IMR-90 (cell line): ENCODE measurements at regions of chr1 and their contacts with region 1.

Region 1: DNA sequence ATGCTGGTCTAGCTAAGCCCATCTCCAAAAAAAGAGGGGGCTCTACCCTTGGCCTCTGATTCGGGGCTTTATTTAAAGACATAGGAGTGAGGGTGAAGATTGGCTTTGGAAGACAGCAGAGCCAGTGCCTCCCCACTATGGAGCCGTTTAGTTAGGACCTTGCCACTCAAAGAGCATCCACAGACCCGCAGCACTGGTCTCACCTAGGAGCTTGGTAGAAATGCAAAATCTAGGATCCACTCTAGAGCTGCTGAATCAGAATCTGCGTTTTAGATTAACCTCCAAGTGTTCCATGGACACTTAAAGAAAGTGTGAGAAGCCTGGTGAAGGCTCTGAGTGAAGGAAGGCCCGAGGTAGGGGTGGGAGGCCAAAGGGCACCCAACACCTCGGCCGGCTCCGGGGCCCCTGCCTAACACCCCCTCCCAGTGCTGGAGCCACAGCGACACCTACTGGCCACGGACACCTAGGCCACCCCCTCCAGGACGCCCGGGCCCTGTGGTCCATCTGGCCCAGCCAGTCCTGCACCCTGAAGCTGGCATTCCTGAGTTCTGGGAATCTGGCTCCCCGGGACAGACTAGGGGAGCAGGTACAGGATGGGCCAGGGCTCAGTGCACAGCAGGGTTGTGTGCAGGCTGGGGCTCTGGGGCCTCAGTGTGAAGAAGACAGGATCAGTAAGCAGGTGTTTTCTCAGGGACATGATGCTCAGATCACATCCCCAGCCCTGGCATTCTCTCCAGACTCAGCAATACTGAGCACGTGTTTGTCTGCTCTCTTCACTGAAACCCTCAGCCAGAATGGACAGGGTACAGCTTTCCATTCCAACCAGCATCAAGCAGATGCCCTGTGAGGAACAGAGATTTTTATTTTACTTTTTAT is 79.2 kb downstream of the TMEM53 start:
- DNase-seq: peak; percentile 31
- ATAC-seq: peak; percentile 98
- H3K4me3 ChIP-seq: no peak overlapping the region
- H3K27ac ChIP-seq: no peak overlapping the region
- H3K4me1 ChIP-seq: no peaks in the 10 kb centered on the region
- H3K27me3 ChIP-seq: peaks cover 44% of the 10 kb centered on the region
- CTCF ChIP-seq: peak; percentile 90
- POLR2A ChIP-seq: no peak
- RAD21 ChIP-seq: peak; percentile 94

Region 2: GRCh38 chr1:44012941-44013609 is 582.0 kb before region 1 on chr1:
- CTCF ChIA-PET with region 1: no interaction called
- POLR2A ChIA-PET with region 1: no interaction called
- dilution Hi-C with region 1: no loop called
- in situ Hi-C with region 1: no loop called
- intact Hi-C with region 1: loop called (anchors 5 kb)
- DNase-seq: no peak
- ATAC-seq: no peak
- H3K4me3 ChIP-seq: no peak overlapping the region
- H3K27ac ChIP-seq: no peak overlapping the region
- H3K4me1 ChIP-seq: no peaks in the 10 kb centered on the region
- H3K27me3 ChIP-seq: no peaks in the 10 kb centered on the region
- CTCF ChIP-seq: no peak
- POLR2A ChIP-seq: no peak
- RAD21 ChIP-seq: no peak

Region 3: DNA sequence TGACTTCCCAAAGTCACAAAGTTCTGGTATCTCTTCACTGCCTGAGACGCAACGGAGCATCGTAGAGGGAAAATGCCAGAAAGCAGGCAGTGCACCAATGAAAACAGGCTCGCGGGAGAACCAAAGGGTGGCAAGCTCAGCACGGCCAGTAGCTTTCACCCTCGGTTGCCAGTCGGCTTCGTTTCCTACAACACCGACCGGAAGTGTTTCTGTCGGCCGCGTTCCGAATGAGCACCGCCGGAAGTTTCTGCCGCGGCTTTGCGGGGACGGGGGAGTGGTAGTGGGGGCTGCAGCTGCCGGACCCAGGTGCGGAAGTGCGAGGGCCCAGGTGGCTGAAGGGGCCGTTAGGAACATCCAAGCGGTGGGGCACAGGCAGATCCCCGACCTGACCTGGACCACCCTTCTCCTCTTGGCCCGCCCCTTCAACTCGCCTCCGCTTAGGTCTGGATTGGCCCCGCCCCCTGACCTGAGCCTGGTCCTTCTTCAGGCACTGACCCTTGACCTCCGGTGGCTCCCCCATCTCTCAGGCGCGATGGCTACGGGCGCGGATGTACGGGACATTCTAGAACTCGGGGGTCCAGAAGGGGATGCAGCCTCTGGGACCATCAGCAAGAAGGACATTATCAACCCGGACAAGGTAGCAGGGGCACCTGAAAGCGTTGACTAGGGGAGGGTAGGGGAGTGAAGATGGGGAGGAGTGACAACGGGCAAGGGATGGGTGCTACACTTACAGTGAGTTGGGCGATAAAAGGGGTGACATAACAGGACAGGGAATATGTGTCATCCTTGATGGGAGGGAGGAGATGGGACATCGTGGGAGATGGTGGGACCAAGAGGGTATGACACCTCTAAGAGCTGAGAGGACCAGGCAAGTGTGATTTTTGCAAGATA is 381.6 kb before region 1 on chr1 and contains the start of gene DMAP1:
- CTCF ChIA-PET with region 1: no interaction called
- POLR2A ChIA-PET with region 1: no interaction called
- dilution Hi-C with region 1: no loop called
- in situ Hi-C with region 1: loop called (anchors 5 kb)
- intact Hi-C with region 1: loop called (anchors 1 kb)
- DNase-seq: peak; percentile 83
- ATAC-seq: peak; percentile 91
- H3K4me3 ChIP-seq: peak within 1 kb of the TSS; percentile 82
- H3K27ac ChIP-seq: peak within 1 kb of the TSS; percentile 75
- H3K4me1 ChIP-seq: peaks cover 3% of the 10 kb centered on the region
- H3K27me3 ChIP-seq: no peaks in the 10 kb centered on the region
- CTCF ChIP-seq: 0 out of 2 replicates have a peak, but pooled peaks have one; percentile 2
- POLR2A ChIP-seq: no peak
- RAD21 ChIP-seq: peak; percentile 39
- total RNA-seq, gene DMAP1: 18.1 and 22.2 TPM in 2 replicates

Region 4: GRCh38 chr1:44377925-44378784 is 217.0 kb before region 1 on chr1:
- CTCF ChIA-PET with region 1: interaction called, 18 read pairs
- POLR2A ChIA-PET with region 1: no interaction called
- dilution Hi-C with region 1: no loop called
- in situ Hi-C with region 1: loop called (anchors 5 kb)
- intact Hi-C with region 1: loop called (anchors 1 kb)
- DNase-seq: peak; percentile 52
- ATAC-seq: peak; percentile 74
- H3K4me3 ChIP-seq: no peak overlapping the region
- H3K27ac ChIP-seq: no peak overlapping the region
- H3K4me1 ChIP-seq: no peaks in the 10 kb centered on the region
- H3K27me3 ChIP-seq: peaks cover 32% of the 10 kb centered on the region
- CTCF ChIP-seq: peak; percentile 74
- POLR2A ChIP-seq: no peak
- RAD21 ChIP-seq: peak; percentile 78